ENCODE measurements at regions of chr13 and their contacts with region 1.

Region 1: GRCh38 chr13:49840266-49840665 is 47.8 kb upstream of the KPNA3 start:
- DNase-seq: no peak
- H3K4me3 ChIP-seq: no peak overlapping the region
- H3K27ac ChIP-seq: no peak overlapping the region
- H3K4me1 ChIP-seq: no peaks in the 10 kb centered on the region
- H3K27me3 ChIP-seq: no peaks in the 10 kb centered on the region
- CTCF ChIP-seq: no peak
- POLR2A ChIP-seq: no peak

Region 2: GRCh38 chr13:49669735-49670309 is 170.4 kb before region 1 on chr13:
- intact Hi-C with region 1: loop called (anchors 5 kb)
- DNase-seq: peak in 1 of 2 donors; percentile 56
- H3K4me3 ChIP-seq: no peak overlapping the region
- H3K27ac ChIP-seq: no peak overlapping the region
- H3K4me1 ChIP-seq: no peaks in the 10 kb centered on the region
- H3K27me3 ChIP-seq: no peaks in the 10 kb centered on the region
- CTCF ChIP-seq: peak; percentile 67 to 76 (median 71)
- POLR2A ChIP-seq: no peak

Region 3: DNA sequence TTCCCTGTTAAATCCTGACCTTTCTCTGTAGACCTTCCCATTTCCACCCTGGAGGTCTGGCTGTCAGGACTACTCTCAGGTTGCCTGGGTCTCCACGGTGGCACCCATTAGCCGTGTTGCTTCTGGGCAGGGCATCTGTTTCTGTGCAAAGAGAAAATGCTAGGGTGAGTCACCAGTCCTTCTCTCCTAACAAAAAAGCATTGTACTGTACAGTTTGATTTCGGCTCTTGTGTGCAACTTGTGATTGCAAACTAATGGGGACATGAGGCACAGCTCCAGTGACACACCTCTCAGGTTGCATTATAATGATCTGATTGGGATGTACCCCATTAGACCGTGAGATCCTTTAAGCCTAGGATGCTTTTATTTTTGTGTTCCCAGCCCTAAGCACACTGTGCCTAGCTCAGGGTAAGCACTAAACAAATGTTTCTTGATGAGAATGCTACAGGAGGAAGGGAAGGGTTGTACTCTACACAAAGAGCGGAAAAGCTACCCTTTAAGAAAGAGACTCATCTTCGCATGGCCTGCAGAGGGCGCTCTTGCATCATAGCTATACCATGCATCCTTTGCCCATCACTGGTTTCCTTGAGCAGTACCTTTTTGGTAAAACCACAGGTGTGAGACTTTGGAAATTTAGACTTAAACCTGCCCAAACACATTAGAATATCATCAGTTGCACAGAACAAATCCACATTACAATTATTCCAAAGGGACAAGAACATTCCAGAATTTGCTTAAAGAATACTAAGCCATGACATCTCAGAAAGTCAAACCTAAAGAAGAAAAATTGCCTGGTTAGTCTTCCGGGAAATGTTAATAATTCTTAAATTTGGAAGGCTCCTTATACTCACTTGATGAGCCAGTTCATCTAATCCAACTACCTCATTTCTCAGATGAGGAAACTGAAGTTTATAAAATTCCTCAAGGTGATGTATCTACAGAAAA is 136.3 kb after region 1 on chr13:
- intact Hi-C with region 1: no loop called
- DNase-seq: peak; percentile 44 to 59
- H3K4me3 ChIP-seq: no peak overlapping the region
- H3K27ac ChIP-seq: no peak overlapping the region
- H3K4me1 ChIP-seq: no peaks in the 10 kb centered on the region
- H3K27me3 ChIP-seq: no peaks in the 10 kb centered on the region
- CTCF ChIP-seq: peak; percentile 63 to 77 (median 74)
- POLR2A ChIP-seq: no peak

Measured in uterus (tissue), 4 donors.